WTC11 (cell line): ENCODE measurements at regions of chr15 and their contacts with region 1.

Region 1: GRCh38 chr15:39511000-39511915 is 69.6 kb upstream of the THBS1 start:
- DNase-seq: no peak
- ATAC-seq: no peak
- H3K4me3 Mint-ChIP-seq: no peak overlapping the region
- H3K27ac Mint-ChIP-seq: no peak overlapping the region
- H3K4me1 Mint-ChIP-seq: no peaks in the 10 kb centered on the region
- H3K27me3 Mint-ChIP-seq: no peaks in the 10 kb centered on the region; the same call in 1 of the 2 replicates
- CTCF ChIP-seq: no peak

Region 2: DNA sequence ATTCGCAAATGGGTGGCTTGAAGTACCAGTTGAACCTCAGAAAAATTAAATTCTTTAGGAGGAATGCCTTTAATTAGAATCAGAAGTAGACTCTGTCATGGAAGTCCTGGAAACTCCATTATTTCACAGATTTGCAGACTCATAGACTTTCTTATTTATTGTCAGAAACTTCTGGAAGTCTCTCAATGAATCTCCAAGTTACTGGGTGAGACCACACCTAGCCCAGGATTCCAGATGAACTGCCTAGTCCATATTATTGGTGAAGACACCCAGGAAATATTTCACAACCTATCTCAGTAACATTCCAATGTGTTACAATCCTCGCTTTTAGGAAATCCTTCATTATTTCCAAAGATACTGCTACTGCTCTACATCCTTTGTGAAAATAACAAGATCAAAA is 63.2 kb after region 1 on chr15:
- CTCF ChIA-PET with region 1: interaction called, 3 read pairs
- POLR2A ChIA-PET with region 1: interaction called, 10 read pairs
- DNase-seq: no peak
- ATAC-seq: no peak
- H3K4me3 Mint-ChIP-seq: no peak overlapping the region
- H3K27ac Mint-ChIP-seq: no peak overlapping the region
- H3K4me1 Mint-ChIP-seq: peaks cover 9% of the 10 kb centered on the region
- H3K27me3 Mint-ChIP-seq: peaks cover 14% of the 10 kb centered on the region
- CTCF ChIP-seq: no peak